ENCODE measurements at regions of chr17 and their contacts with region 1.

Region 1: GRCh38 chr17:5486204-5487124 is at the start of gene MIS12:
- DNase-seq: peak; percentile 93 to 100 (median 97)
- ATAC-seq: peak; percentile 89
- H3K4me3 ChIP-seq: peak within 1 kb of the TSS; percentile 94
- H3K4me3 Mint-ChIP-seq: peak within 1 kb of the TSS; percentile 94
- H3K27ac ChIP-seq: peak within 1 kb of the TSS; percentile 98 to 99
- H3K27ac Mint-ChIP-seq: peak within 1 kb of the TSS; percentile 95
- H3K4me1 ChIP-seq: peaks cover 28% of the 10 kb centered on the region
- H3K4me1 Mint-ChIP-seq: peaks cover 60% of the 10 kb centered on the region
- H3K27me3 ChIP-seq: no peaks in the 10 kb centered on the region
- H3K27me3 Mint-ChIP-seq: no peaks in the 10 kb centered on the region
- CTCF ChIP-seq: no peak
- total RNA-seq, gene MIS12: 21.9 to 24.4 TPM

Region 2: GRCh38 chr17:5155495-5155894 is 331.0 kb before region 1 on chr17:
- CTCF ChIA-PET with region 1: no interaction called
- POLR2A ChIA-PET with region 1: no interaction called
- intact Hi-C with region 1: no loop called
- DNase-seq: no peak
- ATAC-seq: no peak
- H3K4me3 ChIP-seq: no peak overlapping the region
- H3K4me3 Mint-ChIP-seq: no peak overlapping the region
- H3K27ac ChIP-seq: no peak overlapping the region
- H3K27ac Mint-ChIP-seq: no peak overlapping the region
- H3K4me1 ChIP-seq: no peaks in the 10 kb centered on the region
- H3K4me1 Mint-ChIP-seq: no peaks in the 10 kb centered on the region
- H3K27me3 ChIP-seq: peaks cover 0 to 5% of the 10 kb centered on the region in 2 experiments
- H3K27me3 Mint-ChIP-seq: peaks cover 20% of the 10 kb centered on the region
- CTCF ChIP-seq: no peak

Region 3: GRCh38 chr17:5405400-5405799 is 81.1 kb before region 1 on chr17:
- CTCF ChIA-PET with region 1: no interaction called
- POLR2A ChIA-PET with region 1: no interaction called
- intact Hi-C with region 1: no loop called
- DNase-seq: no peak
- ATAC-seq: no peak
- H3K4me3 ChIP-seq: no peak overlapping the region
- H3K4me3 Mint-ChIP-seq: no peak overlapping the region
- H3K27ac ChIP-seq: no peak overlapping the region
- H3K27ac Mint-ChIP-seq: no peak overlapping the region
- H3K4me1 ChIP-seq: no peaks in the 10 kb centered on the region
- H3K4me1 Mint-ChIP-seq: peaks cover 12% of the 10 kb centered on the region
- H3K27me3 ChIP-seq: no peaks in the 10 kb centered on the region
- H3K27me3 Mint-ChIP-seq: no peaks in the 10 kb centered on the region
- CTCF ChIP-seq: no peak

Region 4: DNA sequence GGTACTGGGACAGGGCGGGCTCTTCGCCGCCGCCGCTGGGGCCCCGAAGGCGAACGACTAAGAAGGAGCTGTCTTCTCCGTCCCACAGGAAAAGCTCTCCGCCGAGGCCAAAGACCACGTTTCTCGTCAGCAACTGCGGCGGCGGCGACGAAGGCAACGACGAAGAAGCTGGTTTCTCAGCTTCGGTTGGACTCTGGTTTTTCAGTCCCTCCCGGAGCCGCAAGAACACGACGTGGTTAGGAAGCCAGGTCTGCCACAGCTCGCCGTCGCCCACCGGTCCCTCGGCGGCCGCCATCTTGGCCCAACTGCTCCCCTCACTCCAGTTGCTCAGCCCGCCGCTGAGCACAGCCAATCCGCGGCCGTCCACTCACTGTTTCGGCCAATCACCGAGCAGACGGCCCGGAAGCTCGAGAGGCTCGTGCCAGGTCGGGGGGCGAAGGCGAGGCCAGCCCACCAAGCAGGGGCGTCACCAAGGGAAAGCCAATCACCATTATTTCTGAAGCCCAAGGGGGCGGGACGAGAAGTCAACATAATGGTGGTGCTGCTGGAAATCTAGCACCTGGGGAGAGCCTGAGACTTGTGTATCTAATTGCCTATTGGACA is 67.0 kb before region 1 on chr17 and contains the start of gene NUP88:
- CTCF ChIA-PET with region 1: no interaction called
- POLR2A ChIA-PET with region 1: interaction called, 4 read pairs
- intact Hi-C with region 1: loop called (anchors 1 kb)
- DNase-seq: peak; percentile 92 to 99 (median 96)
- ATAC-seq: peak; percentile 87
- H3K4me3 ChIP-seq: peak within 1 kb of the TSS; percentile 93 to 96
- H3K4me3 Mint-ChIP-seq: peak within 1 kb of the TSS; percentile 99
- H3K27ac ChIP-seq: peak within 1 kb of the TSS; percentile 91 to 99
- H3K27ac Mint-ChIP-seq: peak within 1 kb of the TSS; percentile 99
- H3K4me1 ChIP-seq: peaks cover 44% of the 10 kb centered on the region
- H3K4me1 Mint-ChIP-seq: peaks cover 47% of the 10 kb centered on the region
- H3K27me3 ChIP-seq: no peaks in the 10 kb centered on the region
- H3K27me3 Mint-ChIP-seq: no peaks in the 10 kb centered on the region
- CTCF ChIP-seq: no peak
- total RNA-seq, gene NUP88: 149 to 156 TPM

Region 5: DNA sequence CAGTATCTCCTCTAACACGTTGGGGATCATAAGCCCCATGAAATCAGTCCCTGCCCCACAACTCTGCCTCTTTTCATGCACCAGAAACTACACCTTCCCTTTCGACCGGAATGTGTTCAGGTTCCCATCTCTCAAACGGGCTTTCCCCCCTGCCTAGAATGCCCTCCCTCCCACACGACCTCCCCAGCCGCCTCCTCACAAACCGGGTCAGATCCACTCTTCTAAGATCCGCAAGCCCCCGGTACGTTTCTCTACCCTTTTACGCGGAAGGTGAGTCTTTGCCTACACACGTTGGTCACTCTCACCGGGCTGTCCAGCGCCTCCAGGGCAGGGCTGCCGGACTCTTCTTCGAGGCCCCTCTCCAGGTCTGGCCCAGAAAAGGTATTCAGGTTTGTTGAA is 18.4 kb before region 1 on chr17:
- CTCF ChIA-PET with region 1: interaction called, 4 read pairs
- POLR2A ChIA-PET with region 1: interaction called, 32 read pairs
- intact Hi-C with region 1: loop called (anchors 1 kb)
- DNase-seq: peak in 4 of 9 experiments; percentile 9 to 45 (median 18)
- ATAC-seq: peak; percentile 16
- H3K4me3 ChIP-seq: peak overlapping the region; percentile 78 to 84
- H3K4me3 Mint-ChIP-seq: peak overlapping the region; percentile 81
- H3K27ac ChIP-seq: peak overlapping the region; percentile 49 to 53
- H3K27ac Mint-ChIP-seq: peak overlapping the region; percentile 46
- H3K4me1 ChIP-seq: peaks cover 10% of the 10 kb centered on the region
- H3K4me1 Mint-ChIP-seq: peaks cover 31% of the 10 kb centered on the region
- H3K27me3 ChIP-seq: no peaks in the 10 kb centered on the region
- H3K27me3 Mint-ChIP-seq: no peaks in the 10 kb centered on the region
- CTCF ChIP-seq: no peak

Region 6: GRCh38 chr17:5610956-5611355 is 124.5 kb after region 1 on chr17:
- CTCF ChIA-PET with region 1: no interaction called
- POLR2A ChIA-PET with region 1: no interaction called
- intact Hi-C with region 1: no loop called
- DNase-seq: no peak
- ATAC-seq: no peak
- H3K4me3 ChIP-seq: no peak overlapping the region
- H3K4me3 Mint-ChIP-seq: no peak overlapping the region
- H3K27ac ChIP-seq: no peak overlapping the region
- H3K27ac Mint-ChIP-seq: no peak overlapping the region
- H3K4me1 ChIP-seq: no peaks in the 10 kb centered on the region
- H3K4me1 Mint-ChIP-seq: no peaks in the 10 kb centered on the region
- H3K27me3 ChIP-seq: no peaks in the 10 kb centered on the region
- H3K27me3 Mint-ChIP-seq: peaks cover 13% of the 10 kb centered on the region
- CTCF ChIP-seq: no peak

Region 7: GRCh38 chr17:6179017-6179416 is 692.6 kb after region 1 on chr17:
- CTCF ChIA-PET with region 1: no interaction called
- POLR2A ChIA-PET with region 1: no interaction called
- intact Hi-C with region 1: no loop called
- DNase-seq: no peak
- ATAC-seq: no peak
- H3K4me3 ChIP-seq: no peak overlapping the region
- H3K4me3 Mint-ChIP-seq: no peak overlapping the region
- H3K27ac ChIP-seq: no peak overlapping the region
- H3K27ac Mint-ChIP-seq: no peak overlapping the region
- H3K4me1 ChIP-seq: no peaks in the 10 kb centered on the region
- H3K4me1 Mint-ChIP-seq: no peaks in the 10 kb centered on the region
- H3K27me3 ChIP-seq: no peaks in the 10 kb centered on the region
- H3K27me3 Mint-ChIP-seq: peaks cover 24% of the 10 kb centered on the region
- CTCF ChIP-seq: no peak

Region 8: DNA sequence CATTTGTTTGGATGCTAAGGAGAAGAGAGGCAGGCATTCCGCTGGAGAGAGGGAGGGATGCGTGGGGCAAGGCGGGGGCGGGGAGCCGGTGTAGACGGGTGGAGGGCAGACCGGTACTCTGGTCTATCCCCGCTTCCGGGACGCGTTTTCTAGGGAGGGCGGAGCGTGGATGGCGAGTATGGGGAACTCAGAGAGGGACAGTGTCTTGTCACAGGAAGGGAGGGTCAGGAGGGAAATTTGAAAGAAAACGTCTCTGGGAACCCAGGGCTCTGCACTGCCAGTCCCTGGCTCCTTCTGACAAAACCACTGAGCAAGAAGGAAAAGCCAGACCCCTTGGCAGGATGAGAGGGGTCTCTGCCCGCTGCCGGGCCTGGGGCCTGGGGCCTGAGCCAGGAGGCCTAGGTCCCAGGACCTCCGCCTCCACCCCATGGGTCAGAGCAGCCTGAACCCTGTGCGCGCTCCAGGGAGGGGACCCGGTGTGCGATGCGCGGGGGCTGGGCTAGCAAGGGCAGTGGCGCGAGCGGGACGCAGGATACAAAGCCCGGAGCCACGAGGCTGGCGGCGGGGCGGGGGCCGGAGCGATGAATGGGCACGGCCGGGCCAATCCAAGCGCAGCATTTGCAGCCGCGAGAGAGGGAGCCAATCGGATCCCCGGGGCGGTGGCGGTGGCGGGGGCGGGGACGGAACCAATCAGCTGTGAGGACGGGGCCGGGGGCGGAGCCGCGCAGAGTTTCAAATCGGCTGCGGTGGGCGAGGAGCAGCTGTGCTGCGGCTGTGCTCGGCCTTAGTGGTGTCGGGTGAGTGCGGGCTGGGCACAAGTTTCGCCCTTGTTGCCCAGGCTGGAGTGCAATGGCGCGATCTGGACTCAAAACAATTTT is 957.5 kb after region 1 on chr17 and contains the start of gene PIMREG:
- CTCF ChIA-PET with region 1: no interaction called
- POLR2A ChIA-PET with region 1: no interaction called
- intact Hi-C with region 1: loop called in 1 of 2 experiments (anchors 1 kb)
- DNase-seq: peak; percentile 79 to 91 (median 90)
- ATAC-seq: peak; percentile 96
- H3K4me3 ChIP-seq: peak within 1 kb of the TSS; percentile 68 to 94
- H3K4me3 Mint-ChIP-seq: peak within 1 kb of the TSS; percentile 85
- H3K27ac ChIP-seq: peak within 1 kb of the TSS; percentile 25 to 37
- H3K27ac Mint-ChIP-seq: peak within 1 kb of the TSS; percentile 77
- H3K4me1 ChIP-seq: peaks cover 6% of the 10 kb centered on the region
- H3K4me1 Mint-ChIP-seq: peaks cover 12% of the 10 kb centered on the region
- H3K27me3 ChIP-seq: no peaks in the 10 kb centered on the region
- H3K27me3 Mint-ChIP-seq: peaks cover 10% of the 10 kb centered on the region
- CTCF ChIP-seq: no peak
- total RNA-seq, gene PIMREG: not detected